ENCODE measurements at regions of chr2 and their contacts with region 1.

Region 1: DNA sequence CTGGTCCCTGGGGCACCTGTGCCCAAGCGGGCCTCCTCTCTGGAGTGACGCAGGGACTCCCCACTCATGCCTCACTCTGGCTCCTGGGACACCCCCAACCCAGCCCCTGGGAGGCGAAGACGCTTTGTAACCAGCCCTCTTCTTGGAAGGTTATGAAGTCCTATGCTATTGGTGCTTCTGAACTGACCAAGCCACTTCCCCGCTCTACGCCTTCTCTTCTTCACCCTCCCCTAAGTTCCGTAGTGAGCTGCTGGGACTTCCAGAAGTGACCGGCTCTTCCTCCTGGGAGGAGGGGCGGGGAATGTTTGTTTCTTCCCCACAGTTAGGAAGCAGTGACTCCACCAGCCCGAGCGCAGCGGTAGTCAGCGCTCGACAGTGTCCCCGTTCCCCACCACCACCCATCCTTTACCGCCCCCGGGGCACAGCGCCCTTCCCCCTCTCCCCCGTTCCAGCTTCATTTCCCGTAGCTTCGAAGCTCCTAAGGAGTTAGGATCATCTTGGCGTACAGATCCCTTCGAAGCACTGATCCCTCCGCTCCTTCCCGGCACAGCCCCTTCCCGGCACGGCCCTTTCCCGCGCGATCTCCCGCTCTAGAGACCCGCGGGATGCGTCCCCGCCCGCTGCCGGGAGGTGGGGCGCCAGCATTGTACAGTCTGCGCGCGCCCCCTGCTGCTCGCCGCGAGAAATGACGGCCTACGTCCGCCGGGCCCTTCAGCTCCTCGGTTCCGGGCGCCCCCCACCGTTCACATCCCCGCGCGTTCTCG is 25.3 kb upstream of the NOTO start:
- DNase-seq: peak; percentile 91
- H3K4me3 Mint-ChIP-seq: peak overlapping the region; percentile 77
- H3K27ac Mint-ChIP-seq: no peak overlapping the region
- H3K4me1 Mint-ChIP-seq: peaks cover 26% of the 10 kb centered on the region
- H3K27me3 Mint-ChIP-seq: peaks cover 31% of the 10 kb centered on the region

Region 2: GRCh38 chr2:72887754-72888437 is 289.2 kb before region 1 on chr2:
- CTCF ChIA-PET with region 1: interaction called, 71 read pairs
- POLR2A ChIA-PET with region 1: no interaction called
- intact Hi-C with region 1: loop called (anchors 1 kb)
- DNase-seq: peak; percentile 71
- H3K4me3 Mint-ChIP-seq: peak overlapping the region; percentile 69
- H3K27ac Mint-ChIP-seq: no peak overlapping the region
- H3K4me1 Mint-ChIP-seq: peaks cover 11% of the 10 kb centered on the region
- H3K27me3 Mint-ChIP-seq: peaks cover 64% of the 10 kb centered on the region

Region 3: DNA sequence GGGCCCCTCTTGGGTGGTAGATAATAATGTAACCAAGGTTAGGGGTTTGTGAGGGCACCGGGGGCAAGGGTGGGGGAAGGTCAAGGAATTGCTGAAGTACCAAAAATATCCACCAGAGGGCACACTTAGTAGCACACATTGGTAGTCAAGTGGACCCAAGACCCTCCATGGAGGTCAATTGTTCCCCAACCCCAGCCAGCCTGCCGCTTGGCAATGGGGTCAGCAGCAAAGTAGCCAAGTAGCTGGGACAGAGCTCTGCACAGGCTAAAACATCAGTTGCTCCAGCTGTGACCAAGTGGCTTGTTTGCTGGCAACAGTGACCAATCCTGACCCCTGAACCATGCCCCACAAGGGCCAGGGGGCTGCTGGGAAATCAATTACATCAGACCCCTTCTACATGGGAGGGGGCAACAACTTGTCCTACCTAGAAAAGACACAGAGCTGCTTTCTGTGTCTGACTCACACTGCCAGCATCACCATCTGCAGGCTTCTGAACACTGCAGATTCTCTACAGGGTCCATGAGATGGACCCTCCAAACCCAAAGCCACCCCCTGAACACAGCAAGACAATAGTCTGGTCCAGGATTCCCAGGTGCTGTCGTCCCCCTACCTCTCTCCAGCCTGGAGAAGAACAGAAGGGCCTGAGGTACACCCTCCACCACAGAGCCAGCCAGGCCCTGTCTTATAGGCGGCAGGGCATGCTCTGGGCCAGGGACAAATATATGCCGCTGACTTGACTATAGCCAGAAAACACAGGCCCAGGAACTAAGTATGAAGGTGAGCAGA is 183.7 kb before region 1 on chr2:
- CTCF ChIA-PET with region 1: interaction called, 113 read pairs
- POLR2A ChIA-PET with region 1: no interaction called
- intact Hi-C with region 1: loop called (anchors 1 kb)
- DNase-seq: peak; percentile 40
- H3K4me3 Mint-ChIP-seq: no peak overlapping the region
- H3K27ac Mint-ChIP-seq: no peak overlapping the region
- H3K4me1 Mint-ChIP-seq: no peaks in the 10 kb centered on the region
- H3K27me3 Mint-ChIP-seq: no peaks in the 10 kb centered on the region

Region 4: DNA sequence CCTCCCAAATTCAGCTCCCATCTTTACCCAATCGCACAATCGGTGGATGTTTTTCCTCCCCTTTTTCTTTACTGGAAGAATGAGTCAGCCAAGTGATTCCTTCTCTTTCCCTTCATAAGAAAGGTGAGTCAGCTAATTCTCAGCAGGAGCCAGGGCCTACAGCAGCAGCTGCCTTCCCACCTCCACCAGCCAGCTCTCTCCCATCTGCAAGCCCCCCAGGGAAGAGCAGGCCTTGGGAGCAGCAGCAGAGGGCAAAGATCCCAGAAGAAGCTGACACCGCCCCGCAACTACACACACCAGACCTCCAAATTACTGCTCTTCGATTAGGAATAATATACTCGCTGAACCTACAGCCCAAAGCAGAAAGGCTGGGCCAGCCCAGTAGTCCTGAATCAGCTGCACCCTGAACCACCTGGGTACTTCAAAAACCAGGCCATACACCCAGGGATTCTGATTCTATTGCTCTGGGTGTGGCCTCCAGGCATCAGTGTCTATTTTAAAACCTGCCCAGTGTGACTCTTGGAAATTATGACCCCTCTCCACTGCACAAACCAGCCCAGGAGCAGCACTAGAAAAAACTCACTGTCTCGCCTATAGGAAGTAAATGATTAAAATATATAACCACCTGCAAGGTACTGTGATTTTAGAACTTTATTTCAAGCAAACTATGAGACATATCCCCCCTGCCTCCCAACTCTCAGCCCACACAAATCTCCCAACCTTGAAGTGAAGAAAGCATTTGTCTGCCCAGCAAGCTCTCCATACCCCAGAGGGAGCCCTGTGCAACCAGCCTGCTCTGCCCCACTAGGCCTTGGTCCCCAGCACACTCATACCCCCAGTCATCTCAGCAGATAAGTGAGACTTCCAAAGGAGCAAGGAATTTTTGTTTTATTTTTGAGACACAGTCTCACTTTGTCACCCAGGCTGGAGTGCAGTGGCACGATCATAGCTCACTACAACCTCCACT is 112.9 kb before region 1 on chr2:
- CTCF ChIA-PET with region 1: interaction called, 11 read pairs
- POLR2A ChIA-PET with region 1: no interaction called
- intact Hi-C with region 1: no loop called
- DNase-seq: no peak
- H3K4me3 Mint-ChIP-seq: no peak overlapping the region
- H3K27ac Mint-ChIP-seq: peak overlapping the region; percentile 65
- H3K4me1 Mint-ChIP-seq: peaks cover 32% of the 10 kb centered on the region
- H3K27me3 Mint-ChIP-seq: no peaks in the 10 kb centered on the region

Region 5: DNA sequence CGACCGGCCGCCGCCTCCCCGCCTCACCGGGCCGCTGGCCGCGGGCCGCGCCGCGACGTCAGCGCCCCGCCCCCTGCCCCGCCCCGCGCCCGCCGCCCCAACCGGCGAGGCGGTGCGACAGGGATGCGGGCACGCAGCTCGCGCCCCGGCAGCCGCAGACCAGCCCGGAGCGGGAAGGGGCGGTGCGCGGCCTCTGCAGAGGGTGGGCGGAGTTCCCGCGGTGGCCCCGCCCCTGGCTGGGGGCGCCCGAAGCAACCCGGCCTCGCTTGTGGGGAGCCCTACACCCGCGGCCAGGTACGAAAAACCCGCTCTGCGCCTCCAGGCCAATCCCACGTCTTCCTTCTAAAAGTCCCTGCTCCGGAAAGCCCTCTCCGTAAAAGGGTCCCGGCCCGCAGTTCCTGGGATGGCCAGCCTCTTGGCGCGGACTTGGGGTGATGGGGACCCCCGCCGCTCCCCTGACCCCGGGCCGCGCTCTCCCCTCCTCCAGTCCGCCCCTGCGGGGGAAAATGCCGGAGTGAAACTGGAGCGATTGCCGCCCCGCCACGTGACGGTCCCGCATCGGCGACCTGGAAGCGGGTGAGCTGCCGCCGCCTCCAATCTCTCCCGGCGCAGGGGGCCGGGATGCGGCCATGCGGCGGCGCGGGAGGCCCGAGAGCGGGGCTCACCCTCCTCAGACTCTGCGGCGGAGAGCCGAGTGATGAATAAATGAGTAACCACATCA is 64.0 kb before region 1 on chr2 and contains the start of gene RAB11FIP5:
- CTCF ChIA-PET with region 1: interaction called, 21 read pairs
- POLR2A ChIA-PET with region 1: interaction called, 3 read pairs
- intact Hi-C with region 1: loop called (anchors 2 kb)
- DNase-seq: peak; percentile 83
- H3K4me3 Mint-ChIP-seq: peak within 1 kb of the TSS; percentile 81
- H3K27ac Mint-ChIP-seq: no peak within 1 kb of the TSS
- H3K4me1 Mint-ChIP-seq: peaks cover 21% of the 10 kb centered on the region
- H3K27me3 Mint-ChIP-seq: no peaks in the 10 kb centered on the region
- total RNA-seq, gene RAB11FIP5: 11.1 to 11.2 TPM

Region 6: DNA sequence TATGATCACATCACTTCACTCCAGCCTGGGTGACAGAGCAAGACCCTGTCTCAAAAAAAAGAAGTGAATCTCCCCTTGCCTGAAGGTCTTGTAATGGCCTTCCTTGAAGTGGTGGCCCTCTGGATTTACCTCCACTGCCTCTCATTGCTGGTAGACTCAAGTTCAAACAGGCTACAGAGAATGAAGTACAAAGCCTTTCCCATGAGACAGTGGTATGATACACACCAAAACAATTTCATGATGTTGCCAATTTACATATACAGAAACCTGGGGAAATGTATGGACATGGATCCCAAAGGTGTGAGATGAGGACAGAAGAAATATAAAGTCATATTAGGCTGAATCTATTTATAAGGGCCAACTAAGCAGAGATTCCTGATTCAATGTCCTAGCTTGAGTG is 20.5 kb after region 1 on chr2:
- CTCF ChIA-PET with region 1: interaction called, 10 read pairs
- POLR2A ChIA-PET with region 1: no interaction called
- intact Hi-C with region 1: no loop called
- DNase-seq: no peak
- H3K4me3 Mint-ChIP-seq: no peak overlapping the region
- H3K27ac Mint-ChIP-seq: no peak overlapping the region
- H3K4me1 Mint-ChIP-seq: peaks cover 5% of the 10 kb centered on the region
- H3K27me3 Mint-ChIP-seq: peaks cover 24% of the 10 kb centered on the region

Region 7: GRCh38 chr2:73293534-73294171 is 116.6 kb after region 1 on chr2 and contains the start of gene EGR4:
- CTCF ChIA-PET with region 1: interaction called, 6 read pairs
- POLR2A ChIA-PET with region 1: no interaction called
- intact Hi-C with region 1: loop called (anchors 5 kb)
- DNase-seq: peak; percentile 93
- H3K4me3 Mint-ChIP-seq: peak within 1 kb of the TSS; percentile 68
- H3K27ac Mint-ChIP-seq: no peak within 1 kb of the TSS
- H3K4me1 Mint-ChIP-seq: peaks cover 7% of the 10 kb centered on the region
- H3K27me3 Mint-ChIP-seq: peaks cover 64% of the 10 kb centered on the region
- total RNA-seq, gene EGR4: 0.24 to 0.34 TPM

Measured in activated CD4-positive, alpha-beta memory T cell treated with anti-CD3 and anti-CD28 coated beads for 36 hours (primary cell).